ENCODE measurements at regions of chr7 and their contacts with region 1.

Region 1: GRCh38 chr7:105759670-105760550 is 116.5 kb downstream of the ATXN7L1 start:
- DNase-seq: no peak
- H3K4me3 ChIP-seq: no peak overlapping the region
- H3K27me3 ChIP-seq: no peaks in the 10 kb centered on the region
- CTCF ChIP-seq: peak; percentile 52

Region 2: DNA sequence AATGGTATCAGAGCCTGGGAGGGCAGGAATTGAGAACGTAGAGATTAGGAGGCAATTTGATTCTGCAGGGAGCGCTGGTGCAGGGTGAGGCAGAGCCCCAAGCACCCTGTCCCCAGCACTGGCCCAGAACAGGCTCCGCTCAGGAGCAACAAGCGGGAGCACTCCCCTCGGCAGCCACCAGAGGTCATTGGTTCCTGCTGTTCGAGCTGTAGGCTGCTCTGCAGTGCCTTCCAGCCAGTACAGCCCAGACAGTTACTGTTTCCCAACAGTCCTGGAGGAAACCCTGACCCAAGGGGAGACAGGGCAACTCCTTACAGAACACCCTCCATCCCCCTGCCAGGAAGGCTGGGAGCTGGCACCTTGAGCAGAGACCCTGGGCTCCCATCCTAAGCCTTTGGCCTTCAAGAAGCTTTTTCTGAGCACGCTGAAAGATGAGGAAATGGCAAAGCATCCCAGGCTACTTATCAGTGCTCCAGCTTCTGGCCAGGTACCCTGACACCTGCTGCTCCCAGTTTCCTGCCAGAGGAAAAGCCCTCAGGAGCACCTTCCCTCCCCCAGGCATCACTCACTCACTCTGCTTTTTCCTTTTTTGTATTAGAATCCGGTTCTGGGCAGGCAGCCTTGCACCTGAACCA is 107.4 kb before region 1 on chr7:
- CTCF ChIA-PET with region 1: interaction called, 21 read pairs
- POLR2A ChIA-PET with region 1: no interaction called
- DNase-seq: no peak
- H3K4me3 ChIP-seq: no peak overlapping the region
- H3K27me3 ChIP-seq: no peaks in the 10 kb centered on the region
- CTCF ChIP-seq: peak; percentile 96

Region 3: DNA sequence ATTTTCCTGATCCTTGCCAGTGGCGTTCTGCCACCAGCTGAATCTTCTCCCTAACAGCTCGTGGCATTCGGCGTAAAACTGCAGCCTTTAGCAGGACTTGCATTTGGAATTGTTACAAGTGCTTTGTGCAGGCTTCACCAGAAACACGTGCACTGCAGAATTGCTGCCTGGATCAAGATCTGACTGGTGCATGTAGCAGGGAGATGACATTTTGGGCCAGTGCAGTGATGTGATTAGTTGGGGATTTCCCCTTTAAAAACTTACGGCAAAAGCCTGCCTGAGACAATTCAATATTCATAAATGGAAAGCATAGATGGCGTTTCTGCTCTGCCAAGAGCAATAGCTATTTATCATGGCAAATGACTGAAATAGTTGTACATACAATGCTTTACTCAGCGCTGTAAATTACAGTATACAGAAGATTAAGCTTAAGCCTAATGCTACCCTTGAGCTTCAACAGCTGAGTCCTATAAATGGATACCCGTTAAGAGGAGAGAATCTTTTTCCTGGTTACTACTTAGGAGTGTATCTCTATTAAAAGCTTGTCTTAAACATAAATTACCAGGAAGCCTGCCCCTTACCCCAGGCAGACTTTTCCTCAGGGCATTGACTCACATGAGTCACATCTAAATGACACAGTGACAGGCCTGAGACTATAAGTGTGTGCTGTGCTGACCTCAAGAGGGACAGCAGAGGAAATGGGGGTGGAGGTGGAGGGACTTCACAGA is 10.2 kb after region 1 on chr7:
- CTCF ChIA-PET with region 1: interaction called, 19 read pairs
- POLR2A ChIA-PET with region 1: no interaction called
- DNase-seq: no peak
- H3K4me3 ChIP-seq: no peak overlapping the region
- H3K27me3 ChIP-seq: no peaks in the 10 kb centered on the region
- CTCF ChIP-seq: no peak

Region 4: GRCh38 chr7:105876091-105876963 is 116.4 kb after region 1 on chr7 and contains the start of gene ATXN7L1:
- CTCF ChIA-PET with region 1: interaction called, 17 read pairs
- POLR2A ChIA-PET with region 1: no interaction called
- DNase-seq: peak; percentile 80
- H3K4me3 ChIP-seq: peak within 1 kb of the TSS; percentile 79
- H3K27me3 ChIP-seq: no peaks in the 10 kb centered on the region
- CTCF ChIP-seq: peak; percentile 23; the same call in 1 of the 2 replicates
- polyA plus RNA-seq, gene ATXN7L1: 2.7 and 4.6 TPM in 2 replicates

Region 5: GRCh38 chr7:106139265-106140251 is 379.6 kb after region 1 on chr7:
- CTCF ChIA-PET with region 1: no interaction called
- POLR2A ChIA-PET with region 1: no interaction called
- DNase-seq: no peak
- H3K4me3 ChIP-seq: no peak overlapping the region
- H3K27me3 ChIP-seq: peaks cover 7% of the 10 kb centered on the region
- CTCF ChIP-seq: no peak